H1 (cell line): ENCODE measurements at regions of chr5 and their contacts with region 1.

Region 1: DNA sequence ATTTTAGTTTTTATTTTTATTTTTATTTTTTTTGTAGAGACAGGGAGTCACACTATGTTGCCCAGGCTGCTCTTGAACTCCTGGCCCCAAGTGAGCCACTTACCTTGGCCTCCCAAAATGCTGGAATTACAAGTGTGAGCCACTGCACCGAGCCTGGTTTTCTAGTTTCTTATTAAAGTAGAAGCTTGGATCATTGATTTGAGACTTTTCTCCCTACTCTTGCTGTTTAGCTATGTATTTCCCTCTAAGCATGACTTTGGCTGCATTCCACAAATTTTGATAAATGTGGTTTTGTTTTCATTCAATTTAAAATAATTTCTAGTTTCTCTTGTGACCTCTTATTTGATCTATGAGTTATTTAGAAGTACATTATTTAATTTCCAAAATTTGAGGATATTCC is 10.4 kb downstream of the SNX2 start:
- DNase-seq: no peak
- H3K4me3 ChIP-seq: no peak overlapping the region
- H3K27ac ChIP-seq: no peak overlapping the region
- H3K4me1 ChIP-seq: peaks cover 0 to 5% (median 2%) of the 10 kb centered on the region in 4 experiments; a peak in 3 of 7 replicates
- H3K27me3 ChIP-seq: no peaks in the 10 kb centered on the region
- CTCF ChIP-seq: no peak
- EP300 ChIP-seq: no peak
- POLR2A ChIP-seq: no peak
- RAD21 ChIP-seq: no peak

Region 2: DNA sequence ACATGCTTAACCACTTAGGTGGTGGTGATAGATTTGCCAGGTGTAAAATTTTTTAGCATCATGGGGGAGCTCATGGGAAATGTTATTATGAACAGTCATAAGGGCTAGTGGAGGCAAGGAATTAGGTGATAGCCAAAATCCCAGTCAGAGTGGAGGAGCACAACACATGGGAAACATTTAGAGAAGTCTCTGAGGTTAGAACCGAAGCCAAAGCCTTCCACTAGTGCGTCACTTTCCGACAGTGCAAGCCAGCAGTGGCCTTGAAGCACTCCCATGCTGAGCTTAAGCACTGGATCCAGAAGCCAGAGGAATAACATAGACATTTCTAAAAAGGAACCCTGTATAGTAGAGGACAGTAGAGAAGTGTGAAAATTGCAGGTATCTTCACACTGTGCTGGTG is 112.0 kb before region 1 on chr5:
- CTCF ChIA-PET with region 1: no interaction called
- POLR2A ChIA-PET with region 1: no interaction called
- DNase-seq: no peak
- H3K4me3 ChIP-seq: no peak overlapping the region
- H3K27ac ChIP-seq: no peak overlapping the region
- H3K4me1 ChIP-seq: no peaks in the 10 kb centered on the region
- H3K27me3 ChIP-seq: no peaks in the 10 kb centered on the region
- CTCF ChIP-seq: no peak
- EP300 ChIP-seq: no peak
- POLR2A ChIP-seq: no peak
- RAD21 ChIP-seq: no peak

Region 3: DNA sequence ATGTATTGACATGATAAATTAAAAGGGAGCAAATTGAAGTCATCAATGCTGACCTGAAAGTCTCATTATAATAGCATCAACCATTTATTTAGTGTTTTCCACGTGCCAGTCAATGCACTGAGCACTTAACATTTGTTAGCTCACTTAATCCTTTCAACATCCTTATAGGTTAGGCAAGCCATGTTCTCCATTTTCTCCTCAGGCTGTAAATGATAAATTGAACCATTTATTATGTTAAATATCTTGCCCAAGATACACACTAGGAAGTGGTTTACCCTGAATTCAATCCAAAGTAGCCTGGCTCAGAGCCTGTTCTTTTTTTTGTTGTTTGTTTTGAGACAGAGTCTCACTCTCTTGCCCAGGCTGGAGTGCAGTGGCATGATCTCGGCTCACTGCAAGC is 35.4 kb before region 1 on chr5:
- CTCF ChIA-PET with region 1: no interaction called
- POLR2A ChIA-PET with region 1: no interaction called
- DNase-seq: no peak
- H3K4me3 ChIP-seq: no peak overlapping the region
- H3K27ac ChIP-seq: no peak overlapping the region
- H3K4me1 ChIP-seq: peaks cover 0 to 6% (median 1%) of the 10 kb centered on the region in 4 experiments; a peak in 1 of 7 replicates
- H3K27me3 ChIP-seq: no peaks in the 10 kb centered on the region
- CTCF ChIP-seq: no peak
- EP300 ChIP-seq: no peak
- POLR2A ChIP-seq: no peak
- RAD21 ChIP-seq: no peak

Region 4: DNA sequence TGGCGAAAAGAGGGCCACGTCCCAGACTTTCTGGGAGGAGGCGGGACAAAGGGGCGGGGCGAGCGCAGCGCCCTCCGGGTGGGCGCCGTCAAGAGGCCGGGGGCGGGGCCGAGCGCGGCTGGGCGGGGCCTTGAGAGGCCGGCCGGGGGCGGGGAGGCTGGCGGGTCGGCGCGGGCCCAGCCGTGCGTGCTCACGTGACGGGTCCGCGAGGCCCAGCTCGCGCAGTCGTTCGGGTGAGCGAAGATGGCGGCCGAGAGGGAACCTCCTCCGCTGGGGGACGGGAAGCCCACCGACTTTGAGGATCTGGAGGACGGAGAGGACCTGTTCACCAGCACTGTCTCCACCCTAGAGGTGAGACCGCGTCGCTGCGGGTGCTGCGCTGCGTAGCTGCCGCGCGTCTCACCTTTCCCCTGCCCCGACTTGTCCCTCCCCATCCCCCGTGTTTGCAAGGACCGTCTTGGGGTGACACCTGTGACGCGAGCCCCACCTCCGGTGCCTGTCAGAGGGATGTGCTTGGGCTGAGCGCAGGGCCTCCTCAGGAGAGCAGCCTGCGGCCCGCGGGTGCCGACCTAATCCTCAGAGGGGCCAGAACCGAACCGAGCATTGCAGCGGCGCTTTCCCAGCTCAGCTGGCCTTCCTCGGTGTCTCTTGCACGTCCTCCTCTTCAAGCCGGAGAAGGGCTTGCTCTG is 10.3 kb before region 1 on chr5 and contains the start of gene SNX2:
- CTCF ChIA-PET with region 1: interaction called, 6 read pairs
- POLR2A ChIA-PET with region 1: interaction called, 10 read pairs
- DNase-seq: peak; percentile 61 to 98
- H3K4me3 ChIP-seq: peak within 1 kb of the TSS; percentile 66 to 100 (median 94)
- H3K27ac ChIP-seq: peak within 1 kb of the TSS; percentile 86
- H3K4me1 ChIP-seq: peaks cover 0 to 2% (median 0%) of the 10 kb centered on the region in 4 experiments; a peak in 1 of 7 replicates
- H3K27me3 ChIP-seq: no peaks in the 10 kb centered on the region
- CTCF ChIP-seq: peak in 2 of 3 experiments; percentile 37 to 47; a peak in 2 of 4 replicates
- EP300 ChIP-seq: no peak
- POLR2A ChIP-seq: peak; percentile 74 to 88
- RAD21 ChIP-seq: no peak
- total RNA-seq, gene SNX2: 54.4 and 61.2 TPM in 2 replicates

Region 5: DNA sequence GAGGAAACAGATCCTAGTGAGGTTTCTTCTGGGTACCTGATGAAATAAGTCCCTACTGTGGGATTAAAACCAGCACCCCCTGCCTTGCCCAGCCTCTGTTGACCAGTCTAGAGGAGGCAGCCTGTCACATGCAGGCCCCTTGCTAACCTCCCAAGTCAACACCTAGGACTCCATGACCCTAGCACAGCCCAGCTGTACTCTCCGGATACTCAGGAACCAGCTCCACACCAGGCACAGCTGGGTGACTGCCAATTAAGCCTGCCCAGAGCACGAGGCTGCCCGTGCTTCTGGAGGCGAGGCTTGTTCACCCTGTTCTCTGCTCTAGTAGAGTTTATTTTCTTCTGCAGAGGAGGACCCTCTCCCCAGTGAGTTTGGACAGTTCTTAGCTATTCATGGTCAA is 152.6 kb after region 1 on chr5:
- CTCF ChIA-PET with region 1: no interaction called
- POLR2A ChIA-PET with region 1: no interaction called
- DNase-seq: no peak
- H3K4me3 ChIP-seq: no peak overlapping the region
- H3K27ac ChIP-seq: peak overlapping the region; percentile 5; the same call in 1 of the 2 replicates
- H3K4me1 ChIP-seq: peaks cover 0 to 6% (median 3%) of the 10 kb centered on the region in 4 experiments; a peak in 5 of 7 replicates
- H3K27me3 ChIP-seq: no peaks in the 10 kb centered on the region
- CTCF ChIP-seq: no peak
- EP300 ChIP-seq: no peak
- POLR2A ChIP-seq: no peak
- RAD21 ChIP-seq: no peak